ENCODE measurements at regions of chr4 and their contacts with region 1.

Region 1: DNA sequence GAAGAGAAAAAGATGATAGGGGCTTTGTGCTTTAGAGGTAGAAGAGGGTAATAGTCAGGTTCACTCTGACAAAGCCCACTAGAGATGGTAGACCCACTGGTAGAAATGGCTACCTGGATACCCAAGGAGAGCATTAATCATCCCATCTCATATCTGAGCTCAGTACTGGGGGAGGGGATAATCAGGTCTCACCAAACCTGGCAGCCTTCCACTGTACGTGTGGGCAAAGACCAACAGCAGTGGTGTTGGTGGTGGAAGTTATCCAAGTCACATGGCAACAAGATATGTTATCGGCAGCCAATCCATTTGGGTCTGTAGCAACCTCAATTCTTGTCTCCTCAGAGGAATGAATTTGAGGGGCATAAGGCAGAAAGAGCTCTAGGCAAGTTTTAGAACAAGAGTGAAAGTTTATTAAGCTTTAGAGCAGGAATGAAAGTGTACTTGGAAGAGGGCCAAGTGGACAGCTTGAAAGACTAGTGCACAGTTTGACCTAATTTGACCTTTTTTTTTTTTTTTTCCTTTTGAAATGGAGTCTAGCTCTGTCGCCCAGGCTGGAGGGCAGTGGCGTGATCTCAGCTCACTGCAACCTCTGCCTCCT is 67.0 kb upstream of the CXCL13 start:
- DNase-seq: peak; percentile 71
- H3K4me3 ChIP-seq: no peak overlapping the region
- H3K27ac ChIP-seq: peak overlapping the region; percentile 36
- H3K4me1 ChIP-seq: peaks cover 21% of the 10 kb centered on the region
- H3K27me3 ChIP-seq: peaks cover 8% of the 10 kb centered on the region
- CTCF ChIP-seq: no peak

Region 2: DNA sequence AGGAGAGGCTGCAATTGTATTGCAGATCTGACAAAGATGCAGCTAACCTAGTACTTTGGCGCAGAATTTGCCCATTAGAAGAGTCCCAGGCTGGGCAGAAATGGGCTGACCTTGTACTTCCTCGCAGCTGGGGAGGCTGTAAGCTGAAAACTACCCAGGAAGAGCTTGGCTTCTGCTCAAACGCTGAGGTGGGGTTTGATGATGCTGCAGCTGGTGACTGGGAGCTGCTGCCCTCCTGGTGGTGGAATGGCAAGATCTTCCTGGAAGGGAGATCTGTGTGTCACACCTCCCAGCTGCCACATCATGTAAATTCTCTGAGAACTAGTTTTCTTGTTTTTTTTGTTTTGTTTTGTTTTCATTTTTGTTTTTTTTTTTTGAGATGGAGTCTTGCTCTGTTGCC is 364.2 kb before region 1 on chr4:
- CTCF ChIA-PET with region 1: no interaction called
- dilution Hi-C with region 1: no loop called
- in situ Hi-C with region 1: no loop called
- intact Hi-C with region 1: no loop called
- DNase-seq: no peak
- H3K4me3 ChIP-seq: no peak overlapping the region
- H3K27ac ChIP-seq: no peak overlapping the region
- H3K4me1 ChIP-seq: peaks cover 60% of the 10 kb centered on the region
- H3K27me3 ChIP-seq: no peaks in the 10 kb centered on the region
- CTCF ChIP-seq: peak in 1 of 2 donors; percentile 8

Region 3: GRCh38 chr4:77579406-77580076 is 40.9 kb after region 1 on chr4:
- CTCF ChIA-PET with region 1: no interaction called
- dilution Hi-C with region 1: no loop called
- in situ Hi-C with region 1: no loop called
- intact Hi-C with region 1: loop called (anchors 5 kb)
- DNase-seq: peak; percentile 87
- H3K4me3 ChIP-seq: no peak overlapping the region
- H3K27ac ChIP-seq: peak overlapping the region; percentile 70
- H3K4me1 ChIP-seq: peaks cover 27% of the 10 kb centered on the region
- H3K27me3 ChIP-seq: no peaks in the 10 kb centered on the region
- CTCF ChIP-seq: no peak

Region 4: GRCh38 chr4:77938560-77938959 is 399.9 kb after region 1 on chr4:
- CTCF ChIA-PET with region 1: no interaction called
- dilution Hi-C with region 1: no loop called
- in situ Hi-C with region 1: no loop called
- intact Hi-C with region 1: no loop called
- DNase-seq: no peak
- H3K4me3 ChIP-seq: no peak overlapping the region
- H3K27ac ChIP-seq: no peak overlapping the region
- H3K4me1 ChIP-seq: no peaks in the 10 kb centered on the region
- H3K27me3 ChIP-seq: no peaks in the 10 kb centered on the region
- CTCF ChIP-seq: no peak

Measured in mammary epithelial cell (primary cell).